ENCODE measurements at regions of chr17 and their contacts with region 1.

Region 1: DNA sequence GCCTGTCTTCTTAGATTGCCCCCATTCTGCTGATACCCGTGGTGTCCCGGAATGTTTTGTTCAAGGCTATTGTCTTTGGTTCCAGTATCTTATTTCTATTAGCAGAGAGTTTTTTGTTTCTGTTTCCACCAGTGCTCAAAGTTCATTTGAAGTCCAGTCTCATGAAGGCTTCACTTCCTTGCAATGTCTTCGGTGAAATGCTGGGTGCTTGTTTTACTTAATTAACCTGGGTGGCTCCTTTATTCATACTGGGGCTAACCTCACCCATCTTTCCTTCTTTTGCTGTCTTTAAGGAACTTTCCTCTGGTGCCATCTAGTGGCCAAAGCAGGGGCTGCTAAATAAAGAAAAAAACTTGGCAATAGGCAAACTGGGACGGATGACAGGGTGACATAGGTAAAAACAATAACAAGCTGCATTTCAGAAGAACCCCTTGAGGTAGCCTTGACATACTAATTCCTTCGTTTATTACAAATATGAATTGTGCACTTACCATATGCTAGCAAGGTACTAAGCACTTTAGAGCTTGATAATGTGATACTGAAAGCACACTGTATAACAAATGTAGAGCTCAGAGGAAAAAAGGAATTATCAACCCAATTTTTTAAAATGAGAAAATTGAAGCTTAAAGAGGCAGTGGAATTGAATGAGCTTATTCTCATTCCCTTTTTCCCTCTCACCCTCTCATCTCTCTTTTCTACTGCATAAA is 2.8 kb upstream of the SMIM36 start:
- DNase-seq: peak; percentile 42
- H3K4me3 ChIP-seq: no peak overlapping the region
- H3K27ac ChIP-seq: no peak overlapping the region
- H3K4me1 ChIP-seq: no peaks in the 10 kb centered on the region
- H3K27me3 ChIP-seq: peaks cover 17% of the 10 kb centered on the region
- CTCF ChIP-seq: peak; percentile 94

Region 2: GRCh38 chr17:55264645-55265298 is 249.3 kb before region 1 on chr17 and contains the start of gene HLF:
- intact Hi-C with region 1: no loop called
- DNase-seq: peak; percentile 83
- H3K4me3 ChIP-seq: peak within 1 kb of the TSS; percentile 73
- H3K27ac ChIP-seq: peak within 1 kb of the TSS; percentile 86
- H3K4me1 ChIP-seq: peaks cover 62% of the 10 kb centered on the region
- H3K27me3 ChIP-seq: peaks cover 37% of the 10 kb centered on the region
- CTCF ChIP-seq: no peak
- total RNA-seq, gene HLF: 22.6 TPM

Region 3: GRCh38 chr17:55416470-55417052 is 97.5 kb before region 1 on chr17:
- intact Hi-C with region 1: loop called (anchors 10 kb)
- DNase-seq: no peak
- H3K4me3 ChIP-seq: peak overlapping the region; percentile 32
- H3K27ac ChIP-seq: peak overlapping the region; percentile 89
- H3K4me1 ChIP-seq: peaks cover 60% of the 10 kb centered on the region
- H3K27me3 ChIP-seq: no peaks in the 10 kb centered on the region
- CTCF ChIP-seq: no peak

Region 4: DNA sequence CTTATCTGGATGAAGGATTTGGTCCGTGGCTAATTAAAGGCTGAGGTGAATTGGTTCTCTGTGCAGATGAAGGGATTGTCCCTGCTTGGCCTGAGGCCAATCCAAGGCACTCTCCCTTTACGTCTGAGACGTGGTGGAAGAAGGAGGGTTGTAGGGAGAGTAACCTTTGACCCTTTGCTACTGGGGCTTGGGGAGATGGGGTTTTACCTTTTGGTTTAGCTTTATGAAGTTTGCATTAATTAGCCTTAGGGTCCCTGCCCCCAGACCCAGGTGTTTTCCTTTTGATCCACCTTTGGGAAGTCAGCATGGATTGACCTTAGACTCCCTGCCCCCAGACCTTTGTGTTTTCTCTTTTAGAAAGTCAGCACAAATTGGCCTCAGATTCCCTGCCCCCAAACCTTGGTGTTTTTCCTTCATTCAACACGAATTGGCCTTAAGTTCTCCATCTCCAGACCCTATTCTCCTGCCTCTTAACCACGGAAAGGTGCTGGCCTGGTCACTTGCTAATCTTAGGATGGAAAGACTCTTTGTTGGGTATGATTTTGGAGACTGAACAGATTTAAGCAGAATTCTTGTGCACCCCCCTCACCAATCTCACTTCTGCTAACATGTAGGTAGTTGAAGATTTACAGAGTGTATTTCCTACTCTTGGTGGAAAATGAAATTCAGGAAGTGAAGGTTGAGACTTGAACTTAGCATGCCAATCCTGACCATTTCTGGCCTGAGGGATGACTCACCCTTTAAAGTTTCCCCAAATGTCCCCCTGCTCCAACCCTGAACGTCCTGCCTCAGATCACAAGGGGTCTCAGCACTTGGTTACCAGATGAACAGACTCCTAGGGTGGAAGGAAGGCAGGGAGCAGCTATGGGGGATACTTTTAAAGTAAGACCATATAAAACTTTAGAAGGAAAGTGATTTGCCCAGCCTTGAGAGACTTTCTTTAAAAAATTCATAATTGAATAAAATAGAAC is 69.3 kb before region 1 on chr17:
- intact Hi-C with region 1: no loop called
- DNase-seq: no peak
- H3K4me3 ChIP-seq: no peak overlapping the region
- H3K27ac ChIP-seq: no peak overlapping the region
- H3K4me1 ChIP-seq: peaks cover 12% of the 10 kb centered on the region
- H3K27me3 ChIP-seq: no peaks in the 10 kb centered on the region
- CTCF ChIP-seq: no peak

Measured in left ventricle myocardium inferior (tissue), 1 donor.